ENCODE measurements at regions of chr10 and their contacts with region 1.

Region 1: GRCh38 chr10:29257106-29257783 is 31.6 kb upstream of the LYZL1 start:
- DNase-seq: peak; percentile 82
- ATAC-seq: peak; percentile 91
- H3K4me3 ChIP-seq: no peak overlapping the region
- H3K27ac ChIP-seq: peak overlapping the region; percentile 61
- H3K4me1 ChIP-seq: peaks cover 22% of the 10 kb centered on the region
- H3K27me3 ChIP-seq: 0 out of 2 replicates have a peak, but pooled peaks cover 8% of the 10 kb centered on the region
- CTCF ChIP-seq: no peak

Region 2: GRCh38 chr10:29131952-29132820 is 125.1 kb before region 1 on chr10:
- CTCF ChIA-PET with region 1: no interaction called
- POLR2A ChIA-PET with region 1: no interaction called
- intact Hi-C with region 1: no loop called
- DNase-seq: peak; percentile 56
- ATAC-seq: peak; percentile 85
- H3K4me3 ChIP-seq: no peak overlapping the region
- H3K27ac ChIP-seq: peak overlapping the region; percentile 46
- H3K4me1 ChIP-seq: peaks cover 12% of the 10 kb centered on the region
- H3K27me3 ChIP-seq: no peaks in the 10 kb centered on the region
- CTCF ChIP-seq: no peak

Region 3: GRCh38 chr10:29277296-29277695 is 20.1 kb after region 1 on chr10:
- CTCF ChIA-PET with region 1: no interaction called
- POLR2A ChIA-PET with region 1: no interaction called
- intact Hi-C with region 1: loop called (anchors 1 kb)
- DNase-seq: peak; percentile 16
- ATAC-seq: no peak
- H3K4me3 ChIP-seq: no peak overlapping the region
- H3K27ac ChIP-seq: no peak overlapping the region
- H3K4me1 ChIP-seq: peaks cover 7% of the 10 kb centered on the region; the same call in 1 of the 2 replicates
- H3K27me3 ChIP-seq: no peaks in the 10 kb centered on the region
- CTCF ChIP-seq: no peak